Posterior vena cava (tissue), 2 donors: ENCODE measurements at regions of chr3 and their contacts with region 1.

Region 1: DNA sequence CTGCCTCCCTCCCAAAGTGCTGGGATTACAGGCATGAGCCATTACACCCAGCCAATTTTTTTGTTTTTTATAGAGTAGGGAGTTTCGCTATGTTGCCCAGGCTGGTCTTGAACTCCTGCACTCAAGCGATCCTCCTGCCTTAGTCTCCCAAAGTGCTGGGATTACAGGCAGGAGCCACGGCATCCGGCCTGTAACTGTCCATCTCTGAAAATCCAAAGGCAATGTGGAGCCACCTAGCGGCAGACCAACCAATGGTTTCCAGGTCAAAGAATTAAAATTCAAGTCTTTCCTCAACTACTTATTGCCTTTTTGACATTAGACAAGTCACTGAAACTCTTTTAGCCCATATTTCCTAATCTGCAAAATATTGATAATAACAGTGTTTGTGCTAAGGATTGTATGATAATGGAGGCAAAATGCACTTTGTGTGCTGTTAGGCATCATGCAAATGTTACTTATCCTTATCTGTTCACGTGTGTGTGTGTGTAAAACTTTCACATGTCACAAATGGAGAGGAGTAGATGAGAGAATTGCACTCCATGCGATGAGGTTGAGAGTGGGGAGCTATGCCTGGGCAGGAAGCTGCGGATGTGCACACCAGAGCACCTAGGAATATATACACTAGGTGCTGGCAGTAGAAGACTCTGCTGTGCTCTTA is 48.7 kb downstream of the COL8A1 start:
- DNase-seq: peak; percentile 86

Region 2: DNA sequence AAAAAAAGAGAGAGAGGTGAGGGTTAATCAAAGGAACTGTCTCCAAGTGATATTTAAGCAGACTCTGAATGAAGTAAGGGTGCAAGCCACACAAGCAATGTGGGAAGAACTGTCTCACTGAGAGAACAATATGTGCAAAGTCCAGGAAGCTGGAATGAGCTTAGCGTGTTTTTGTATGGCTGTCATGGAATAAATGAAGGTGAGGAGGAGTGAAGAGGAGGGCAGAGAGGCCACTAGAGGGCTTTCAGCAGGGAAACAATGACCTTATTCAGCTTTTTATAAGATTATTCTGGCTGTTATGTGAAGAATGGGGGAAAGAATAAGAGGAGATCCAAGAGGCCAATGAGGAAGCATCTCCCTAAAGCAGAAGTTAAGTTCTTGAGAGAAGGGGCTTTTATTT is 135.6 kb before region 1 on chr3:
- intact Hi-C with region 1: no loop called
- DNase-seq: no peak

Region 3: GRCh38 chr3:99638167-99638948 is 48.7 kb before region 1 on chr3 and contains the start of gene COL8A1:
- intact Hi-C with region 1: loop called (anchors 10 kb)
- DNase-seq: peak; percentile 92
- total RNA-seq, gene COL8A1: 80.6 to 105 TPM

Region 4: DNA sequence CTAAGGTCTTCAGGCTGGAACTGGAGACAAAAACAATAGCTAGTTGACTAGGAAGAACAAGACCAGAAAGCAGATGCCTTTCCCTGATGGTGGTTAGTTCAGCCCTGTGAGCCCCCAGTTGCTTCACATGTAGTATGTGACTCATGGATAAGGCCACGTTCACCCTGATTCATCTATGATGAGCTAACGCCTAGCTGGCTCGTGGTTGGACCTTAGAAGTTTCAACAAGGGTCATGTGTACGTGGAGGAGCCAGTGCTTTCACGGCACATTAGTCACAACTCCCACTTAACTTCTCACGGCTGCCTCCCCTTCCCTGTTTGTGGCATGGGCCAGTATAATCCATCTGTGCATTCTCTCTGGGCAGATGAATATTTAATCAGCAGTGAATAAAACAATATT is 28.1 kb before region 1 on chr3:
- intact Hi-C with region 1: loop called in 1 of 2 experiments (anchors 1 kb)
- DNase-seq: no peak